Naive thymus-derived CD4-positive, alpha-beta T cell (primary cell): ENCODE measurements at regions of chr4 and their contacts with region 1.

Region 1: GRCh38 chr4:1130316-1131186 is 17.2 kb upstream of the RNF212 start:
- DNase-seq: peak; percentile 55 to 86 (median 75)
- ATAC-seq: peak; percentile 100
- H3K4me3 ChIP-seq: no peak overlapping the region
- H3K4me3 Mint-ChIP-seq: peak overlapping the region in 1 of 10 donors; percentile 46
- H3K27ac ChIP-seq: no peak overlapping the region
- H3K27ac Mint-ChIP-seq: no peak overlapping the region
- H3K4me1 ChIP-seq: no peaks in the 10 kb centered on the region
- H3K4me1 Mint-ChIP-seq: peaks cover 0 to 9% (median 4%) of the 10 kb centered on the region in 7 donors
- H3K27me3 ChIP-seq: no peaks in the 10 kb centered on the region
- H3K27me3 Mint-ChIP-seq: peaks cover 0 to 24% (median 6%) of the 10 kb centered on the region in 5 donors

Region 2: GRCh38 chr4:742742-743311 is 387.7 kb before region 1 on chr4:
- CTCF ChIA-PET with region 1: no interaction called
- POLR2A ChIA-PET with region 1: no interaction called
- intact Hi-C with region 1: loop called in 1 of 2 experiments (anchors 2 kb)
- DNase-seq: peak; percentile 47 to 80 (median 69)
- ATAC-seq: peak; percentile 93
- H3K4me3 ChIP-seq: no peak overlapping the region
- H3K4me3 Mint-ChIP-seq: no peak overlapping the region
- H3K27ac ChIP-seq: no peak overlapping the region
- H3K27ac Mint-ChIP-seq: peak overlapping the region in 1 of 9 donors; percentile 41
- H3K4me1 ChIP-seq: no peaks in the 10 kb centered on the region
- H3K4me1 Mint-ChIP-seq: peaks cover 0 to 6% (median 2%) of the 10 kb centered on the region in 7 donors
- H3K27me3 ChIP-seq: no peaks in the 10 kb centered on the region
- H3K27me3 Mint-ChIP-seq: no peaks in the 10 kb centered on the region

Region 3: GRCh38 chr4:1092026-1092982 is 38.2 kb before region 1 on chr4:
- CTCF ChIA-PET with region 1: no interaction called
- POLR2A ChIA-PET with region 1: no interaction called
- intact Hi-C with region 1: no loop called
- DNase-seq: no peak
- ATAC-seq: no peak
- H3K4me3 ChIP-seq: no peak overlapping the region
- H3K4me3 Mint-ChIP-seq: no peak overlapping the region
- H3K27ac ChIP-seq: no peak overlapping the region
- H3K27ac Mint-ChIP-seq: no peak overlapping the region
- H3K4me1 ChIP-seq: no peaks in the 10 kb centered on the region
- H3K4me1 Mint-ChIP-seq: peaks cover 0 to 4% (median 0%) of the 10 kb centered on the region in 7 donors
- H3K27me3 ChIP-seq: no peaks in the 10 kb centered on the region
- H3K27me3 Mint-ChIP-seq: peaks cover 0 to 4% (median 0%) of the 10 kb centered on the region in 5 donors

Region 4: DNA sequence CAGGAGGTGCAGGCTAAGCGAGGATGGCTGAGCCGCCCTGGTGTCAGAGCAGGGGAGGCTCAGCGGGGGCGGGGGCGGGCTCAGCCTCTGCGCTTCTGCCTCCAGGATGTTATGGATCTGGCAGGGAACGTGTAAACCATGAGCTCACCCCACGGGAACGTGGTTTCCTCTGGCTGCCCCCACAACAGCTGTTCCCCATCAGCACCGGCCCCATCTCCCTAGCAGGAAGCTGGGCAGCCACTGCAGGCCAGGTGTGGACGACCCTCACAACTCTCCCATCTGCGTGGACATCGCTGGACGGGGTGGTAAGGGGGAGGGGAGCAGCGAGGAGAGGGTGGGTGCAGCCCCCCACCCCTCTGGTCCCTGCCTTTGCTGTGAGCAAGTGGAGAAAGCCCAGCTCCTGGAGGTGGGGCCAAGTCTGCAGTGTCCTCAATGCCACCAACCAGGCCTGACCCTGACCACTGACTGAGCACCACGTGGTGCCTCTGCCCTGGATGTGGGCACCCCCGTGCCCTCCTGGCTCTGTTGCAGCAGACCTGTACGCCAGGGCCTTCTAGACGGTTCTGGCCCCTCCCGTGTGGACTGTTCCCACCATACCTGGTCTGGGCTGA is 70.0 kb after region 1 on chr4:
- CTCF ChIA-PET with region 1: no interaction called
- POLR2A ChIA-PET with region 1: no interaction called
- intact Hi-C with region 1: loop called in 1 of 2 experiments (anchors 5 kb)
- DNase-seq: peak in 1 of 9 donors; percentile 26
- ATAC-seq: no peak
- H3K4me3 ChIP-seq: peak overlapping the region; percentile 85
- H3K4me3 Mint-ChIP-seq: peak overlapping the region; percentile 29 to 93 (median 84)
- H3K27ac ChIP-seq: peak overlapping the region; percentile 68
- H3K27ac Mint-ChIP-seq: peak overlapping the region in 5 of 9 donors; percentile 19 to 99 (median 59)
- H3K4me1 ChIP-seq: peaks cover 21 to 59% of the 10 kb centered on the region in 2 donors
- H3K4me1 Mint-ChIP-seq: peaks cover 12 to 57% (median 43%) of the 10 kb centered on the region in 7 donors
- H3K27me3 ChIP-seq: no peaks in the 10 kb centered on the region
- H3K27me3 Mint-ChIP-seq: no peaks in the 10 kb centered on the region

Region 5: DNA sequence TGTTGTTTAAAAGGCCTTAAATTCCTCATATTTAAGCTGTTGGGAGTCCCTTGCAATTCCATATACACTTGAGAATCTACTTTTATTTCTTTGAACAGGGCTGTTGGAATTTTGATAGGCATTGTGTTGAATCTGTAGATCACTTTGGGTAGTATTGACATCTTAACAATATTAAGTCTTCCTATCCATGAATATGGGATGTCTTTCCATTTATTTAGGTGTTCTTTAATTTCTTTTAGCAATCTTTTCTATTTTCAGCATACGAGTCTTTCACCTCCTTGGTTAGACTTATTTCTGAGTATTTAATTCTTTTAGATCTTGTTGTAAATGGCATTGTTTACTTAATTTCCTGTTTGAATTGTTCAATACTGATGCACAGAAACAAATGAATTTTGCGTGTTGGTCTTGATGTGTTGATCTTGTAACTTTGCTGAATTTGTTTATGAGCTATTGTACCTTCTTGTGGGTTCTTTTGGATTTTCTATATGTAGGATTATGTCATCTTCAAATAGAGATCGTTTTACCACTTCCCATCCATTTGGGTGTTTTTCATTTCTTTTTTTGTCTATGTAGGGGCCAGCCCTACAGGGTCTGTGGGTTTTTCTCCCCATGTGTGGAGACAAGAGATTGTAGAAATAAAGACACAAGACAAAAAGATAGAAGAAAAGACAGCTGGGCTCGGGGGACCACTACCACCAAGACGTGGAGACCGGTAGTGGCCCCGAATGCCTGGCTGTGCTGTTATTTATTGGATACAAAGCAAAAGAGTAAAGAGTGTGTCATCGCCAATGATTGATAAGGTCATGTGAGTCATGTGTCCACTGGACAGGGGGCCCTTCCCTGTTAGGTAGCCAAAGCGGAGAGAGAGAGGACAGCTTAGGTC is 136.6 kb after region 1 on chr4:
- CTCF ChIA-PET with region 1: interaction called, 34 read pairs
- POLR2A ChIA-PET with region 1: interaction called, 3 read pairs
- intact Hi-C with region 1: loop called (anchors 1 kb)
- DNase-seq: peak in 5 of 9 donors; percentile 36 to 59 (median 48)
- ATAC-seq: peak; percentile 73
- H3K4me3 ChIP-seq: peak overlapping the region; percentile 53
- H3K4me3 Mint-ChIP-seq: peak overlapping the region; percentile 49 to 87 (median 72)
- H3K27ac ChIP-seq: peak overlapping the region; percentile 45
- H3K27ac Mint-ChIP-seq: peak overlapping the region; percentile 40 to 96 (median 82)
- H3K4me1 ChIP-seq: peaks cover 0 to 7% of the 10 kb centered on the region in 2 donors
- H3K4me1 Mint-ChIP-seq: peaks cover 8 to 22% (median 15%) of the 10 kb centered on the region in 7 donors
- H3K27me3 ChIP-seq: no peaks in the 10 kb centered on the region
- H3K27me3 Mint-ChIP-seq: no peaks in the 10 kb centered on the region

Region 6: GRCh38 chr4:1463088-1463926 is 332.8 kb after region 1 on chr4:
- CTCF ChIA-PET with region 1: no interaction called
- POLR2A ChIA-PET with region 1: no interaction called
- intact Hi-C with region 1: no loop called
- DNase-seq: no peak
- ATAC-seq: no peak
- H3K4me3 ChIP-seq: no peak overlapping the region
- H3K4me3 Mint-ChIP-seq: no peak overlapping the region
- H3K27ac ChIP-seq: no peak overlapping the region
- H3K27ac Mint-ChIP-seq: no peak overlapping the region
- H3K4me1 ChIP-seq: no peaks in the 10 kb centered on the region
- H3K4me1 Mint-ChIP-seq: peaks cover 0 to 2% (median 0%) of the 10 kb centered on the region in 7 donors
- H3K27me3 ChIP-seq: no peaks in the 10 kb centered on the region
- H3K27me3 Mint-ChIP-seq: peaks cover 4 to 29% (median 22%) of the 10 kb centered on the region in 5 donors

Region 7: GRCh38 chr4:1512738-1513660 is 382.4 kb after region 1 on chr4:
- CTCF ChIA-PET with region 1: no interaction called
- POLR2A ChIA-PET with region 1: no interaction called
- intact Hi-C with region 1: loop called in 1 of 2 experiments (anchors 1 kb)
- DNase-seq: peak in 8 of 9 donors; percentile 5 to 66 (median 50)
- ATAC-seq: peak; percentile 64
- H3K4me3 ChIP-seq: no peak overlapping the region
- H3K4me3 Mint-ChIP-seq: peak overlapping the region in 5 of 10 donors; percentile 41 to 63 (median 59)
- H3K27ac ChIP-seq: no peak overlapping the region
- H3K27ac Mint-ChIP-seq: no peak overlapping the region
- H3K4me1 ChIP-seq: no peaks in the 10 kb centered on the region
- H3K4me1 Mint-ChIP-seq: no peaks in the 10 kb centered on the region
- H3K27me3 ChIP-seq: peaks cover 0 to 3% of the 10 kb centered on the region in 2 donors
- H3K27me3 Mint-ChIP-seq: peaks cover 0 to 11% (median 5%) of the 10 kb centered on the region in 5 donors

Region 8: DNA sequence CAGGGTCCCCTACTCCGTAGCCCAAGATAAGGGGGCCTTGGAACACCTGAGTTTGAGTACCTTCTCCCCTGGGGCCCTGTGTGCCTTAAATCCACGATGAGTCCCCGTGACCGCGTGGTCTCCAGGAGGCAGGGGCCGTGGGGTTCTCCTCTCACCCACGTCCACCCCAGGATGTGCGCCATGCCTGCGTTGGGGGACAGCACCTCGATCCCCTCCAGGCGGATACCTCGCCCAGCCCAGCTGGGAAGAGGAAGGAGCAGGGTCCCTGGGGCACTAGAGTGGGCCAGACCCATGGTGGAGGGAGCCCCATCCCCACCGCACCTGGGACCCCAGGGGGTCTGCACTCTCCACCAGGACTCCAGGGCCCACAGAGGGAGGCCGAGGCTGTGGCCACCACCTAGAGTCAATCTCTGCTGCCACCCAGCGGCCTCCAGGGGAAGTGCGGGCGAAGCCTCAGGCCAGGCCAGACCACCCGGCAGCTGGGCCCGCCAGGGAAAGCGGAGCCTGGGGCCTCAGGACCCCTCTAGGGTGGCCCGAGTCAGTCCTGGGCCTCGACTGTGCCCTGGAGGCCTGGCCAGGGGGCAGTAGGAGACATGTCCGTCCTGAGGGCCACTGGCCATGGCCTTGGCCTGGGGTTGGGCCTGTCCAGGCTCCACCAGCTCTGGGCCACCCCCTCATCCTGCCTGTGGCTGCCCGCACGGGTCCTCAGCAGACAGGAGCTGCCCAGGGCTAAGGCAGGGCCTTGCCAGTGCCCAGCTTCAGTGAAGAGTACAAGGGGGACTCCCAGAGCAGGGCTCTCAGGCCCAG is 498.5 kb after region 1 on chr4:
- CTCF ChIA-PET with region 1: no interaction called
- POLR2A ChIA-PET with region 1: no interaction called
- intact Hi-C with region 1: loop called in 1 of 2 experiments (anchors 1 kb)
- DNase-seq: peak; percentile 47 to 81 (median 63)
- ATAC-seq: peak; percentile 82
- H3K4me3 ChIP-seq: no peak overlapping the region
- H3K4me3 Mint-ChIP-seq: no peak overlapping the region
- H3K27ac ChIP-seq: no peak overlapping the region
- H3K27ac Mint-ChIP-seq: no peak overlapping the region
- H3K4me1 ChIP-seq: peaks cover 0 to 4% of the 10 kb centered on the region in 2 donors
- H3K4me1 Mint-ChIP-seq: no peaks in the 10 kb centered on the region
- H3K27me3 ChIP-seq: no peaks in the 10 kb centered on the region
- H3K27me3 Mint-ChIP-seq: peaks cover 0 to 6% (median 0%) of the 10 kb centered on the region in 5 donors